AG04449 (cell line): ENCODE measurements at regions of chr5 and their contacts with region 1.

Region 1: DNA sequence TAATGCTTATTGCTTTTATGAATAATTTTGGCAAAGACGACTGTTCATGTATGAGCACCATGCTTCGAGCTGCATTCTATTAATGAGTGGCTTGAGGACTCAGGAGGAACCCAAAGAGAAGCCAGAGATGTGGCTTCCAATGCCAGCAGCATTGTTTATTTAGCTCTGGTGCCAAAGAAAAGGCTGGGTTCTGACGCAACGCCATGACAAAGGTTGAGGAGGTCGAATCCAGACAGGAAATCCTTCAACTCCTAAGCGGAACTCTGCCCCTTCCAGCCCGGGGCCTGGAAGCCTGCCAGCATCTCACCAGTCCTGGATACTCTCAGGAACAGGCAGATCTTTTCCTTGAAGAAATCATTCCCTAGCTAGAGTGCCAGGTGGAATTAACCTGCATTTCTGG is 104.4 kb downstream of the ARHGAP26 start:
- DNase-seq: no peak
- H3K4me3 ChIP-seq: no peak overlapping the region
- CTCF ChIP-seq: no peak

Region 2: DNA sequence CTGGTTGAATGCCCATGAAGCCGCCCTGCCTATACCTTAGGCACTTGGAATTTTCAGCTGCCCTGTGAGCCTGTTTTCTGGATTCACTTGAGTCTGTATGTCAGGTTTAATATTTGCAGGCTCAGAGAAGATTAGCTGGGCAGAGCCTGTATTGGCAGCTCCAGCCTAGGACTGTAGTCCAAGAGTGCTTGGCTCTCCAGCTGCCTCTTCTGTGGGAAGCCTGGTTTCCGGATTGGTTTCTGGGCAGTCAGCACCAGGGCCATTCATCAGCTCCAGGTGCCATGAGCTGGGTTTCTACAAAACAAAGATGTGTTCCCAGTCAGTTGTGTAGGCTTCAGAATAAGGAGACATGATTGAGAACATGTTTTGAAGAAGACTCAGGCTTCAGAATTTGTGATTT is 14.3 kb before region 1 on chr5:
- CTCF ChIA-PET with region 1: interaction called, 28 read pairs
- POLR2A ChIA-PET with region 1: no interaction called
- DNase-seq: no peak
- H3K4me3 ChIP-seq: no peak overlapping the region
- CTCF ChIP-seq: no peak